RWPE1 (cell line): ENCODE measurements at regions of chr1 and their contacts with region 1.

Region 1: DNA sequence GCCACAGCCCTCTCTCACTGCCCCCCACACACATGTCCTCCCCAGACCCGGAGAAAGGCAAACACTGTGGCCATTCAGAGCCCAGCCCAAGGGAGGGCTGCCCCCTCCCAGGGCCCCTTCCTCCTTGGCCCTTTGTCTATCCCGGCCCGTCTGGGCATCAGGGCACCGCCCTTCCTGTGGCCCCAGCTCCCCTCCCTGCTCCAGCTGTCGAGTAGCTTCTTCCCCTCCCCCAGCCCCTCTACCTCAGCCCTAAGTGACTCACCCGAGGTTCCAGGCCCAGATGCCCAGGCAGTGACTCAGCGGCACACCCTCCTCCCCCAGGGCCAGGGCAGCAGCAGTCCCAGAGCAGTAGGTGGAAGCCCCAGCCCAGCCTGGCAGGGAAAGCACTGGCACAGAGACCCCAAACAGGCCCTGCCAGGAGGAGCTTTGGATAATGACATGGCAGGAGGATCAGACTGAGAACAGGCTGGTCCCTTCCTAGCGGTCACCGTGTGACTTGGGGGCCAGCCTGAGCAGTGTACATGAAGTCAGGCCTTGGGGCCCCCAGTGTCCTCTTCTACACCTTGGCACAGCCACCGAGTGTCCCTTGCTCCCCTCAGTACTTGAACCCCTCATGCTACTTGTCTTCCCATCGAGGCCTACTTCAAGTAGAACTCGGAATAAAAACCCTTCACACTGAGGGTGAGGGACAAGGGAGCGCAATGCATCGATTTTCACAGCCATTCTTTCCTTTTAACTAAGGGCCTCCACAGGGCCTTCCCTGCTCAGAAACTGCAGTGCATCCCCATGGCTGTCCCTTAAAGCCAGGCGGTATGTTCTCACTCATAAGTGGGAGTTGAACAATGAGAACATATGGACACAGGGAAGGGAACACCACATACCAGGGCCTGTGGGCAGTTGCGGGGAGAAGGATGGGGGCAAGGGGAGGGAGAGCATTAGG is 1.1 kb upstream of the S100A2 start:
- DNase-seq: peak; percentile 99
- H3K27ac ChIP-seq: peak overlapping the region; percentile 100
- CTCF ChIP-seq: no peak

Region 2: DNA sequence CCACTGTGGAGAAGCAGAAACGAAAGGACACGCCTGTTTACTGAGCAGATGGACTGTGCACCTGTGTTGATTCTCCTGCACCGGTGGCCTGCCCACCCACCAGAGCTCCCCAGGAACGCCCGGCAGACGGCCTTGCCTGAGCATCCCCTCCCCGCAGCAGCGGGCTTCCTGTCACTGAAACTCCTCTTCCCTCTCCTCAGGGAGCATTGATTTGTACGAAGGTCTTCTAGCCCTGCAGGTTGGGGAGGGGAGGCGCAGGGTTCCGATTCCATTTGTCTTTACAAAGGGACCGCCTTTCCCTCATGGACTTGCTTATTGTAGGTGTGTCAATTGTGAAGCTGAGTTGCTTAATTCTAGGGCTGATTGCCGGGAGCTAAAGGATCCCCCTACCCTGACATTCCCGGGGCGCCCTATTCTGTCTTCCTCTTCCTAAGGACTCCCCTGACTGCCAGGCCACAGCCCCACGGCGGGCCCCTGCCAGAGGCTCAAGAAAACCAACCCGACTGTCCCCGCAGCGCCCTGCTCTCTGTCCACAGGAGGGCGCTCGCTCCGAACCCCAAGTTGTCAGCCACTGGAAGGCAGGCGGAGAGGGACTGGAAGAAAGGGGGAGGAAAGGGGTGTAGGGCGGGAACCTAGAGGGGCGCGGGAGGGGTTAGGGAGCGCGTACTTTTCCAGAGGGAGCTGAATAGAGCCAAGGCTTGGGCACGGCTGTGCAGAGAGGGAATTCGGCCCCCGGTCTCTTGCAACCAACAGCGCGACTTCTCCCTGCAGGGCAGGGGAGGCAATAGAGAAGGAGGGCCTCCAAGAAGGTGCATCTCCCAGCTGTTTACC is 33.7 kb before region 1 on chr1:
- CTCF ChIA-PET with region 1: interaction called, 32 read pairs
- POLR2A ChIA-PET with region 1: interaction called, 21 read pairs
- DNase-seq: peak; percentile 74
- H3K27ac ChIP-seq: peak overlapping the region; percentile 99
- CTCF ChIP-seq: peak; percentile 91